Adrenal gland (tissue), 19 donors: ENCODE measurements at regions of chr5 and their contacts with region 1.

Region 1: DNA sequence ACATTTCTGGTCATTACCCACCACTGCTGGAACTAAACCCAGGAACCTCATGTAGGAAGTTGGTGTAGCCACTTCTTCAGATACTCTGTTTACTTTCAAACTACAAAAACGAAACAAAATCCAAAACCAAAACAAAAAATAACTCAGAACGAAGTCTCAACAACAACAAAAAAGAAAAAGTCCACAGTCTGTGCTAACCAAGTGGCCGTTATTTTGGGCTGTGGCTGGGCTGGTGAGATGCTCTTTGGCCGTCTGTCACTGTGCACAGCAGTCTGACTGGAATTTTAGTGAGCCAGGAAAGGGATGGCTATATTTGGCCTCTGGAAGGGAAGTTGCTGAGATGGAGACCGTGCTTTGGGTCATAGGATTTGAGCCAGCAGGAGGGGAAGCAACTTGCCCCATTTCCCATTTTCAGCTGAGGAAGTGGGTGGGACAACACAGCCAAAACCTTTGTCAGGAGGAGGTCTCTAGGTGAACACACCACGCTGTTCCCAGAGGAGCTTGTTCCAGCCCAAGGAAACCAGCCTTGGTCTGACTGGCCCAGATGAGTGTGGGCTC is 334.1 kb downstream of the ZSWIM6 start:
- DNase-seq: peak in 4 of 7 donors; percentile 23 to 59 (median 32)
- H3K4me3 ChIP-seq: peak overlapping the region in 1 of 4 donors; percentile 23
- H3K27ac ChIP-seq: peak overlapping the region in 2 of 5 donors; percentile 17 to 58
- H3K4me1 ChIP-seq: peaks cover 0 to 13% of the 10 kb centered on the region in 2 donors
- H3K27me3 ChIP-seq: no peaks in the 10 kb centered on the region
- CTCF ChIP-seq: no peak
- POLR2A ChIP-seq: peak in 1 of 2 donors; percentile 5

Region 2: DNA sequence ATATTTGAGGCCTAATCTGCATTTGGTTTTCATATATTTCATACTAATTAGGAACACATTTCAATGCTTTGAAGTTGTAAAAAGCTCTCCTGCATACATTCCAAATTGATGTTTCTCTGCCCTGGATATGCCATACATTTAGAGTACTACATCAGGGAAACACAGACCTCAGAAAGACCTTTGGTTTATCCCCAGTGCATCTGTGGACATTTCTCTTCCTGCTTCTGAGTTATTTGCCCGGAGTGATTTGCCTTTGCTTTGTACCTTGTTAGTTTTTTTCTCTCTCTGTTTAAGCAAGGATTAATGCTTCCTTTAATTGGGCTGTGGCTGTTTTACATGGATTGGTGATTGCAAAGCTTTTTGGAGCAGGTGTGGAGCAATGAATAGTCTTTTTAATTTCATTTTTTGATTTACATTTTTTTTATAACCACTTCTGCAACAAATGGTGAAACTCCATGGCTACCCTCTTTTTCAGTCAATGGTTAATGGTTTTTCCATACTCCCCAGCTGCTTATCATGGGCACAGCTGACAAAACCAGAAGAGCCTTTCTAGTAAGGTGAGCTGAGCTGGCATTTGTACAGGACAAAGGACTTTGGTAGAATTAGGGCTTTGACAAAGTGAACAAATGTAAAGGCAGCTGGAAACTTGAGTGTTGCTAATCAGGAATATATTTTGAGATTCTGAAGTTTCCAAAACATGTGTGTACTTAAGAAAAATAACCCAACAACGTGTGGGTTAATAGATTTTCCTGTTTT is 279.9 kb before region 1 on chr5:
- intact Hi-C with region 1: no loop called
- DNase-seq: no peak
- H3K4me3 ChIP-seq: no peak overlapping the region
- H3K27ac ChIP-seq: no peak overlapping the region
- H3K4me1 ChIP-seq: peaks cover 0 to 26% of the 10 kb centered on the region in 2 donors
- H3K27me3 ChIP-seq: no peaks in the 10 kb centered on the region
- CTCF ChIP-seq: no peak
- POLR2A ChIP-seq: no peak

Region 3: GRCh38 chr5:61919920-61920319 is 253.8 kb after region 1 on chr5:
- intact Hi-C with region 1: loop called in 1 of 2 experiments (anchors 10 kb)
- DNase-seq: no peak
- H3K4me3 ChIP-seq: no peak overlapping the region
- H3K27ac ChIP-seq: no peak overlapping the region
- H3K4me1 ChIP-seq: no peaks in the 10 kb centered on the region
- H3K27me3 ChIP-seq: no peaks in the 10 kb centered on the region
- CTCF ChIP-seq: no peak
- POLR2A ChIP-seq: no peak